GM12878 (cell line): ENCODE measurements at regions of chr1 and their contacts with region 1.

Region 1: DNA sequence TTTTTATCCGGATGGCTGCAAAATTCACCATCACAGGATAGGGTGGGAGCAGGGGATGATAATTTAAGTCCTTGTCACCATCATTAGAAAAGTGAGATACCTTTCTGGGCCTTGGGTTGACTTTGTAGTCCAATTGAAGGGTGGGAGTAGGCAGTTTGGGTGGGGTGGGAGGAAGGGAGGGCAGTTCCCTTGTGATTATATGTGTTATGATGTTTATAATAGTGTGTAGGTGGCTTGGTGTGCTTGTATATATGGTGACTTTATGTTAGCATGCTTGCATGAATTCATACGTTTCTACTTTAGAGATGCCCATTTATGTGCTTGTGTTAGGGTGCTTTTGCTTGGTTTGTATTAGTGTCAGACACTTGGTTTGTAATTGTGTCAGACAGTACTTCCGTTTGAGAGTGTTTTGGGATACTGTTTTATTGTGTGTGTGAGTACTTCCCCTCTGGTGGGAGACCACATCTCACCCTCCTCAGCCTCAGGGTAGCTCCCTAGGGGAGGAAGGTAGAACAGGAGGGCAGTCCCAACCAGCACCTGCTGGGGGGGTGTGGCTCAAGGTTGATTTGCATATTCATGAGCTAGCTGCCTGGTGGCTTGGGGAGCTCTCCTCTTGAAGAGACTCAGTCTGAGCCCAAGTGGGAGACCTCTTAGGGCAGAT is 6.3 kb upstream of the POU3F1 start:
- DNase-seq: peak; percentile 58
- ATAC-seq: peak; percentile 85
- H3K4me3 ChIP-seq: no peak overlapping the region
- H3K27ac ChIP-seq: no peak overlapping the region
- H3K4me1 ChIP-seq: peaks cover 29% of the 10 kb centered on the region
- H3K27me3 ChIP-seq: no peaks in the 10 kb centered on the region
- CTCF ChIP-seq: no peak
- EP300 ChIP-seq: peak; percentile 54 to 71; a peak in 2 of 4 replicates
- POLR2A ChIP-seq: no peak
- RAD21 ChIP-seq: no peak

Region 2: GRCh38 chr1:37892151-37893047 is 160.5 kb before region 1 on chr1:
- CTCF ChIA-PET with region 1: no interaction called
- POLR2A ChIA-PET with region 1: no interaction called
- RAD21 ChIA-PET with region 1: no interaction called
- SMC1A ChIA-PET with region 1: no interaction called
- in situ Hi-C with region 1: no loop called
- intact Hi-C with region 1: no loop called
- DNase-seq: no peak
- ATAC-seq: peak; percentile 58
- H3K4me3 ChIP-seq: no peak overlapping the region
- H3K27ac ChIP-seq: no peak overlapping the region
- H3K4me1 ChIP-seq: no peaks in the 10 kb centered on the region
- H3K27me3 ChIP-seq: no peaks in the 10 kb centered on the region
- CTCF ChIP-seq: no peak
- EP300 ChIP-seq: no peak
- POLR2A ChIP-seq: no peak
- RAD21 ChIP-seq: no peak

Region 3: DNA sequence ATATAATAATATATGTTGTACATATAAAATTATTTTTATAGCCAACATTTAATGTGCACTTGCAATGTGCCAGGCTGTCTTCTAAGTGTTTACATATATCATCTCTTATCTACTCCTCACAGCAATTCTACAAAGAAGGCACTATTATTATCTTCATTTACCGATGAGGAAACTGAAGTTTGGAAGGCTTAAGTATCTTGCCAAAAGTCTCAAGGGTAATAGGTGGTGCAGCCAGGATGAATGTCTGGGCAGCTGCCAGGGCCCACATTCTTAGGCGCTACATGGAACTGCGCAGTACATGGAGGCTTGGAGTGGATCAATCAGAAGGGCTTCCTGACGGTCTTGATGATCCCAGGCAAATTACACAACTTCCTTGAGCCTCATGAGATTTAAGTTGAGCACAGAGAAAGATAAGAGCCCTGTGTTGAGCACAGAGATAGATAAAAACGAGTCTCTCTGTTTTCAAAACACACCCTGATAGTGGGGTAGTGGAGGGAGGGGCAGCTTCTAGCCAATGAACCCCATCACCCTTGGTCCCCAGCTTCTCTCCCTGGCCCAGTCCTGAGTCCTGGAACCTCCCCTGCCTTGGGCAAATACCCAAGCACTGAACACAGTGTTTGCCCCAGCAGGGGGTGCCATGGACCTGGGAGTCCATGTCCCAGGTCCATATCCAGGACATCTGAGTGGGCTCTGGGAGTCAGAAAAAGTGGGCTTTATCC is 15.5 kb before region 1 on chr1:
- CTCF ChIA-PET with region 1: interaction called, 13 read pairs
- POLR2A ChIA-PET with region 1: interaction called, 14 read pairs
- RAD21 ChIA-PET with region 1: interaction called, 10 read pairs
- SMC1A ChIA-PET with region 1: interaction called, 9 read pairs
- in situ Hi-C with region 1: no loop called
- intact Hi-C with region 1: no loop called
- DNase-seq: no peak
- ATAC-seq: peak; percentile 36; the same call in 2 of the 3 replicates
- H3K4me3 ChIP-seq: no peak overlapping the region
- H3K27ac ChIP-seq: no peak overlapping the region
- H3K4me1 ChIP-seq: no peaks in the 10 kb centered on the region
- H3K27me3 ChIP-seq: no peaks in the 10 kb centered on the region; a peak in 1 of 4 replicates
- CTCF ChIP-seq: peak in 2 of 3 experiments; percentile 11 to 47; a peak in 2 of 6 replicates
- EP300 ChIP-seq: no peak
- POLR2A ChIP-seq: no peak
- RAD21 ChIP-seq: peak; percentile 57

Region 4: GRCh38 chr1:38758820-38759219 is 705.9 kb after region 1 on chr1:
- CTCF ChIA-PET with region 1: no interaction called
- POLR2A ChIA-PET with region 1: no interaction called
- RAD21 ChIA-PET with region 1: no interaction called
- SMC1A ChIA-PET with region 1: no interaction called
- in situ Hi-C with region 1: no loop called
- intact Hi-C with region 1: no loop called
- DNase-seq: no peak
- ATAC-seq: no peak
- H3K4me3 ChIP-seq: no peak overlapping the region
- H3K27ac ChIP-seq: no peak overlapping the region
- H3K4me1 ChIP-seq: no peaks in the 10 kb centered on the region
- H3K27me3 ChIP-seq: peaks cover 0 to 3% of the 10 kb centered on the region in 2 experiments; a peak in 1 of 4 replicates
- CTCF ChIP-seq: no peak
- EP300 ChIP-seq: no peak
- POLR2A ChIP-seq: no peak
- RAD21 ChIP-seq: no peak